Ovary (tissue), 10 donors: ENCODE measurements at regions of chr13 and their contacts with region 1.

Region 1: GRCh38 chr13:33761740-33762139 is 56.2 kb upstream of the RFC3 start:
- DNase-seq: no peak
- H3K4me3 ChIP-seq: no peak overlapping the region
- H3K27ac ChIP-seq: no peak overlapping the region
- H3K4me1 ChIP-seq: no peaks in the 10 kb centered on the region
- H3K27me3 ChIP-seq: no peaks in the 10 kb centered on the region
- CTCF ChIP-seq: no peak
- EP300 ChIP-seq: no peak
- POLR2A ChIP-seq: no peak

Region 2: GRCh38 chr13:34156841-34157365 is 395.2 kb after region 1 on chr13:
- intact Hi-C with region 1: no loop called
- DNase-seq: peak; percentile 24 to 57 (median 44)
- H3K4me3 ChIP-seq: no peak overlapping the region
- H3K27ac ChIP-seq: no peak overlapping the region
- H3K4me1 ChIP-seq: peaks cover 3% of the 10 kb centered on the region
- H3K27me3 ChIP-seq: no peaks in the 10 kb centered on the region
- CTCF ChIP-seq: no peak
- EP300 ChIP-seq: no peak
- POLR2A ChIP-seq: no peak

Region 3: GRCh38 chr13:34913040-34913439 is 1151.3 kb after region 1 on chr13:
- intact Hi-C with region 1: loop called in 1 of 4 experiments (anchors 10 kb)
- DNase-seq: no peak
- H3K4me3 ChIP-seq: no peak overlapping the region
- H3K27ac ChIP-seq: no peak overlapping the region
- H3K4me1 ChIP-seq: no peaks in the 10 kb centered on the region
- H3K27me3 ChIP-seq: no peaks in the 10 kb centered on the region
- CTCF ChIP-seq: no peak
- EP300 ChIP-seq: no peak
- POLR2A ChIP-seq: no peak

Region 4: GRCh38 chr13:35720690-35721554 is 1959.2 kb after region 1 on chr13:
- intact Hi-C with region 1: loop called in 1 of 4 experiments (anchors 5 kb)
- DNase-seq: peak; percentile 58 to 80 (median 72)
- H3K4me3 ChIP-seq: peak overlapping the region; percentile 13
- H3K27ac ChIP-seq: peak overlapping the region in 1 of 2 donors; percentile 39
- H3K4me1 ChIP-seq: peaks cover 4% of the 10 kb centered on the region
- H3K27me3 ChIP-seq: no peaks in the 10 kb centered on the region
- CTCF ChIP-seq: peak; percentile 65 to 84 (median 70)
- EP300 ChIP-seq: no peak
- POLR2A ChIP-seq: no peak